Heart left ventricle (tissue), 16 donors: ENCODE measurements at regions of chrX and their contacts with region 1.

Region 1: DNA sequence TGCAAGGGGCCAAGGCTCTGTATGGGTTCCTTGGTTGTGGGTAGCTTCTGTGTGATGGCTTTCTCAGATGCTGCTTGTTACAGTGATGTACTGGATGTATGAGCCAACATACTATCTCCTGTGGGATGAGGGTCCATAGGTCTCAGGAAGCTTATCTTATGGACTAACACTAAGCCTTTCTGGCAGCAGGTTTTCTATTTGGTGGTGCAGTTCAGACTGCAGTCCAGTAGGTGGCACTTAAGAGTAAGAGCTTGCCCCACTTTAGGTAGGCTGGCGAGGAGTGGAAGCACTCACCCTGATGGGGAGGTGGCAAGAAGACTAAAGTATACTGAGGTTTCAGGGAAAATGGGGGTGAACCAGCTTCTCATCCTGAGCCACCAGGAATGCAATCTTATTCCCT is 306.7 kb upstream of the MAOA start:
- DNase-seq: peak in 1 of 5 donors; percentile 3
- ATAC-seq: peak in 1 of 4 donors; percentile 56
- H3K4me3 ChIP-seq: no peak overlapping the region
- H3K27ac ChIP-seq: no peak overlapping the region
- H3K4me1 ChIP-seq: no peaks in the 10 kb centered on the region
- H3K27me3 ChIP-seq: peaks cover 0 to 24% (median 0%) of the 10 kb centered on the region in 9 donors
- CTCF ChIP-seq: peak; percentile 7 to 65 (median 36)
- POLR2A ChIP-seq: no peak

Region 2: GRCh38 chrX:43750248-43750676 is 400.9 kb after region 1 on chrX:
- intact Hi-C with region 1: loop called in 4 of 10 experiments (anchors 10 kb)
- DNase-seq: peak in 4 of 5 donors; percentile 36 to 44 (median 38)
- ATAC-seq: peak; percentile 79 to 88 (median 84)
- H3K4me3 ChIP-seq: no peak overlapping the region
- H3K27ac ChIP-seq: no peak overlapping the region
- H3K4me1 ChIP-seq: peaks cover 0 to 4% (median 0%) of the 10 kb centered on the region in 12 donors
- H3K27me3 ChIP-seq: peaks cover 0 to 9% (median 0%) of the 10 kb centered on the region in 9 donors
- CTCF ChIP-seq: peak; percentile 36 to 65 (median 58)
- POLR2A ChIP-seq: no peak

Region 3: GRCh38 chrX:44113337-44113736 is 764.0 kb after region 1 on chrX:
- intact Hi-C with region 1: no loop called
- DNase-seq: no peak
- ATAC-seq: no peak
- H3K4me3 ChIP-seq: no peak overlapping the region
- H3K27ac ChIP-seq: no peak overlapping the region
- H3K4me1 ChIP-seq: no peaks in the 10 kb centered on the region
- H3K27me3 ChIP-seq: peaks cover 0 to 21% (median 0%) of the 10 kb centered on the region in 9 donors
- CTCF ChIP-seq: no peak
- POLR2A ChIP-seq: no peak